Heart left ventricle (tissue), 16 donors: ENCODE measurements at regions of chr9 and their contacts with region 1.

Region 1: GRCh38 chr9:130053504-130054324 is at the start of gene GPR107:
- DNase-seq: peak; percentile 85 to 92 (median 87)
- ATAC-seq: peak; percentile 84 to 99 (median 98)
- H3K4me3 ChIP-seq: peak within 1 kb of the TSS; percentile 79 to 100 (median 96)
- H3K27ac ChIP-seq: peak within 1 kb of the TSS; percentile 82 to 93 (median 89)
- H3K4me1 ChIP-seq: peaks cover 5 to 45% (median 27%) of the 10 kb centered on the region in 12 donors
- H3K27me3 ChIP-seq: no peaks in the 10 kb centered on the region
- CTCF ChIP-seq: peak in 1 of 12 donors; percentile 2
- POLR2A ChIP-seq: peak in 1 of 2 donors; percentile 80
- total RNA-seq, gene GPR107: 16.1 to 33.2 (median 21.3) TPM

Region 2: DNA sequence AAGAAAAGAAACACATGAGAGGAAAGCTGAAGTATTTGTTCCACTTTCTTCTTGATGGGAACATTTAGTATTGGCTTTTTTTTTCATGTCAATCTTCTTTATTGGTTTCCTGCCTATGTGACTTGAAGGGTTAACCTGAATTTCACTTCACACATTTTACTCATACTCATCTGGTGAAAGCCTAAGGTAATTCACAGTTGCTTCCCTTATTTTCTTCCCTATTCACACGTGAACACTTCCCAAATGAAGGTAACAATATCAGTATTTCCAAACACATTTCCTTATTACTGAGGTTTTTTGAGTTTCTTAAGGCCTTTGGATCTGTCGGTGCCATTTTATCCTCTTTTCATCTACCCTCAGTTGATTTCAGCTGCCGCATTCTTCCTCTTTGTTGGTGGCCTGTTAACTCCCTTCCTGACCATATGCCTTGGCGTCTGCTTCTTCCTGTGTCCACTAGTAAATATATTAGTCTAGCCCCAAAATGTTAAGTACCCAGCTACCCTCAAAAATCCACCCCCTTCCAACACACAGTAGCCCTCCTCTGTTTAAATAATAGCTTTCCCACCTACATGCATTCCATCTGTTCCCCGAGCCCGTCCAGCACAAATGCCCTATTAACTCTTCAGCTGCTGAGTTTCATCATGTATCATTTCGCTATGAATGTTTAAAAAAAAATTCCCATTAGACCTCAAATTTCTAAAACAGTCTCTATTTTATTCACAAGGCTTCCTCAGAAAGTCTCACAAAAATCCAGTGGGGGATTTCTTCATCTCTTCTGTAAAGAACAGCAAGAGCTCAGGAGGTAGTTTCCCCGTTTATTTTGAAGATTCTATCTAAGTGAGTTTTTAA is 121.2 kb before region 1 on chr9:
- intact Hi-C with region 1: loop called in 1 of 10 experiments (anchors 10 kb)
- DNase-seq: no peak
- ATAC-seq: peak in 2 of 4 donors; percentile 37 to 47
- H3K4me3 ChIP-seq: peak overlapping the region in 3 of 12 donors; percentile 6 to 7 (median 7)
- H3K27ac ChIP-seq: peak overlapping the region; percentile 5 to 88 (median 62)
- H3K4me1 ChIP-seq: peaks cover 0 to 61% (median 35%) of the 10 kb centered on the region in 12 donors
- H3K27me3 ChIP-seq: no peaks in the 10 kb centered on the region
- CTCF ChIP-seq: no peak
- POLR2A ChIP-seq: no peak

Region 3: DNA sequence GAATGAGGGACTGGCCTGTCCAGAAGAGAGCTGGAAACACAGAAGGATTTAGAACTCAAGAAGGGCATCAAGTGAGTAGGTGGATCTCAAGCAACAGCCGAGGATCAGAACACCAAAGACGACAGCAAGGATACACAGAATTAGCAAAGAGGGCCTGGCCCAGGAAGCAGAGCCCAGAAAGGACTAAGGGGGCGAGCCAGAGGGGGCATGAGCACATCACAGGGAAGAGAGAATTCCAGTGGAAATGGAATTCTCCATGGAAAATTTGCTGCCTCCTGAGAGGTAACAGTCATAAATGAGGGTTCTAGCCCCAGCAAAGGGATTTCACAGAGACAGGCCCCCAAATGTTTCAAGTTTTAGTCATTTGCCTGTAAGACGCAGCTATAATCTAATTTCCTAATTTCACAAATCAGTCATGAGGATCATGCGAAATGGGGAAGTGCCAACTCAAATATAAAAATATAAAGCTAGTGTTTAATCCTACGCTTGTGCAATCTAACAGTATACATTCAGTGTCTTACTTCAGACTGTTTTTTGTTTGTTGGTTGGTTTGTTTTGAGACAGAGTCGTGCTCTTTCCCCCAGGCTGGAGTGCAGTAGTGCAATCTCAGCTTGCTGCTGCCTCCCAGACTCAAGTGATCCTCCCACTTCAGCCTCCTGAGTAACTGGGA is 57.4 kb before region 1 on chr9:
- intact Hi-C with region 1: no loop called
- DNase-seq: no peak
- ATAC-seq: no peak
- H3K4me3 ChIP-seq: peak overlapping the region in 1 of 12 donors; percentile 9
- H3K27ac ChIP-seq: peak overlapping the region in 6 of 12 donors; percentile 6 to 87 (median 46)
- H3K4me1 ChIP-seq: peaks cover 0 to 52% (median 17%) of the 10 kb centered on the region in 12 donors
- H3K27me3 ChIP-seq: no peaks in the 10 kb centered on the region
- CTCF ChIP-seq: no peak
- POLR2A ChIP-seq: no peak